ENCODE measurements at regions of chr21 and their contacts with region 1.

Region 1: DNA sequence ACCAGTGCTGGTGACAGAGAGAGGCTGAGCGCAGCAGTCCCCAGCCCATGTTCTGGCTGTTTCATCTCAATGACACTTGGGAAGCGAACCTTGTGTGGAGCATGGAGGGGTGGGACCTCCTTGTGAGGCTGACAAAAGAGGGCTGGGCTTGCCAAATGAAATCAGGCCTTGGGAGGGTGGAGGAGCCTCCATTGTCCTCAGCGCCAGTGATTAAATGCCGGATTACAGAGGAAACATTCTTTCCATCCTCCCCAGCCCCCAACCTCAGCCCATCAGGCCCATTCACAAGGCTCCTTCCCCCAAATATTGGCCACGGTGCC is 63.3 kb upstream of the PAXBP1 start:
- DNase-seq: no peak
- H3K4me3 ChIP-seq: no peak overlapping the region
- H3K27ac ChIP-seq: no peak overlapping the region
- H3K4me1 ChIP-seq: no peaks in the 10 kb centered on the region
- H3K27me3 ChIP-seq: peaks cover 31% of the 10 kb centered on the region

Region 2: GRCh38 chr21:32726839-32727686 is 107.8 kb before region 1 on chr21:
- in situ Hi-C with region 1: no loop called
- DNase-seq: peak; percentile 54
- H3K4me3 ChIP-seq: peak overlapping the region; percentile 95
- H3K27ac ChIP-seq: peak overlapping the region; percentile 69
- H3K4me1 ChIP-seq: 0 out of 2 replicates have a peak, but pooled peaks cover 9% of the 10 kb centered on the region
- H3K27me3 ChIP-seq: no peaks in the 10 kb centered on the region

Region 3: DNA sequence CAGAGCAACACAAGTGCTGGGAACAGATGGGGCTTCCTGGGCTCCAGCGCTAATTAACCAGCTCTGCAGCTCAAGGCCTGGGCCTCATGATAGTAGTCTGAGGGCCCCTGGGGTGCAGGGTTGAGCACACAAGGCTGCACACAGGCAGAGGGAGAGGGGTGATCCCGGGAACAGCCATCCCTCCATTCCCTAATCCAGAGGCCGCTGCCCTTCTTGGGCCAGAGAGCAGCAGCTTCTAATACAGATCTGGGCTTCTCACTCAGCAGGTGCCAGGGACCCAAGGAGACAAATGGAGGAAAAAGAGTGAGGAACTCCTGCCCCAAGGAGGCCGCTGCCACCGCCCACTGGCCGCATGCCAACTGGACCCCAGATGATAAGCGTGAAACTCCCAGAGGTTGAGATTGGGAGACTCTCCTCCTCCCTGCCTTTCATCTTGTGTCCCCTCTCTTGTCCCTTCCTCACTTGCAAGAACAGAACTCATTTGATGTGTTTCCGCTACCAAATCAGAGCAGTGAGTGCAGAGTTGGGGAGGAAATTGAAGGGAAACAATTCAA is 336.8 kb after region 1 on chr21:
- in situ Hi-C with region 1: loop called (anchors 10 kb)
- DNase-seq: no peak
- H3K4me3 ChIP-seq: no peak overlapping the region
- H3K27ac ChIP-seq: no peak overlapping the region
- H3K4me1 ChIP-seq: no peaks in the 10 kb centered on the region
- H3K27me3 ChIP-seq: peaks cover 46% of the 10 kb centered on the region

Measured in GM23248 (cell line).